WTC11 (cell line): ENCODE measurements at regions of chr18 and their contacts with region 1.

Region 1: GRCh38 chr18:24488824-24489493 is 28.5 kb downstream of the HRH4 start:
- DNase-seq: no peak
- ATAC-seq: no peak
- H3K4me3 Mint-ChIP-seq: no peak overlapping the region
- H3K27ac Mint-ChIP-seq: no peak overlapping the region
- H3K4me1 Mint-ChIP-seq: peaks cover 2% of the 10 kb centered on the region; the same call in 1 of the 2 replicates
- H3K27me3 Mint-ChIP-seq: no peaks in the 10 kb centered on the region; the same call in 1 of the 2 replicates
- CTCF ChIP-seq: peak; percentile 77

Region 2: GRCh38 chr18:24265502-24266064 is 223.4 kb before region 1 on chr18:
- CTCF ChIA-PET with region 1: no interaction called
- POLR2A ChIA-PET with region 1: no interaction called
- DNase-seq: no peak
- ATAC-seq: peak; percentile 43
- H3K4me3 Mint-ChIP-seq: 0 out of 2 replicates have a peak overlapping the region, but pooled peaks have one; percentile 1
- H3K27ac Mint-ChIP-seq: peak overlapping the region; percentile 61
- H3K4me1 Mint-ChIP-seq: peaks cover 42% of the 10 kb centered on the region
- H3K27me3 Mint-ChIP-seq: no peaks in the 10 kb centered on the region; the same call in 1 of the 2 replicates
- CTCF ChIP-seq: no peak

Region 3: GRCh38 chr18:24446953-24447538 is 41.9 kb before region 1 on chr18:
- CTCF ChIA-PET with region 1: interaction called, 21 read pairs
- POLR2A ChIA-PET with region 1: no interaction called
- DNase-seq: no peak
- ATAC-seq: no peak
- H3K4me3 Mint-ChIP-seq: no peak overlapping the region
- H3K27ac Mint-ChIP-seq: no peak overlapping the region
- H3K4me1 Mint-ChIP-seq: no peaks in the 10 kb centered on the region
- H3K27me3 Mint-ChIP-seq: no peaks in the 10 kb centered on the region
- CTCF ChIP-seq: no peak

Region 4: GRCh38 chr18:24502644-24503523 is 13.9 kb after region 1 on chr18:
- CTCF ChIA-PET with region 1: interaction called, 23 read pairs
- POLR2A ChIA-PET with region 1: no interaction called
- DNase-seq: no peak
- ATAC-seq: no peak
- H3K4me3 Mint-ChIP-seq: no peak overlapping the region
- H3K27ac Mint-ChIP-seq: no peak overlapping the region
- H3K4me1 Mint-ChIP-seq: peaks cover 3% of the 10 kb centered on the region; the same call in 1 of the 2 replicates
- H3K27me3 Mint-ChIP-seq: no peaks in the 10 kb centered on the region; the same call in 1 of the 2 replicates
- CTCF ChIP-seq: no peak

Region 5: DNA sequence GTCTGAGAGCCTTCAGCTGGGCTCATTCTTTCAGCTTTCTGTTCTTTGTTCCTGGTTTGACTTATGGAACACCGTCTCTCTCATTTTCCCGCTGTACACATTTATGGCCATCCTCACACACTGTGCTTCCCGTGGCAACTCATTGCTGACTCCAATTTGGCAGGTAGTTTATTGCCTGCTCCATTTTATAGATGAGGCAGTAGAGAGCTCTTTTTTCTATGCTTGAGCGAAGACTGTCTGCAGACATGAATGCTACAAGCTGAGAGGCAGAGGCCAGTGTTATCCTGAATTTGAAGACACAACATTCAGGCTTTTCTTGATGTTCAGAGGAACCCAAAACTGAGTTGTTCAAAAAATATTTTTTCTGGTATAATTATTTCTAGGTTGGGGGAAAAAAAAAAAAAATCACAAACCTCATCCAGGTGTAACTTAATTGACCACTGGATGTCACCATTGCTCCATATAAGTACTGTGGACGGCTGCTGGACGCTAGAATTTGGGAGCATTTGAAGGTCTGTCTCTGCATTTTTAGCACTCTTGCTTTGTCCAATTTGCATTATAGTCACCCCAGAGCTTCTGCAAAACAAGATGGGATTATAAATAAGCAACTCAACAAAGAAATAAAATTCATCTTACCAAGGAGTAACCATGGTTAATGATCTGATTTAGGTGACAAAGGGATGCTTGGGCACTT is 55.0 kb after region 1 on chr18:
- CTCF ChIA-PET with region 1: interaction called, 25 read pairs
- POLR2A ChIA-PET with region 1: no interaction called
- DNase-seq: no peak
- ATAC-seq: peak; percentile 65
- H3K4me3 Mint-ChIP-seq: no peak overlapping the region
- H3K27ac Mint-ChIP-seq: no peak overlapping the region
- H3K4me1 Mint-ChIP-seq: peaks cover 24% of the 10 kb centered on the region
- H3K27me3 Mint-ChIP-seq: no peaks in the 10 kb centered on the region
- CTCF ChIP-seq: peak; percentile 35; the same call in 1 of the 2 replicates